Activated CD4-positive, alpha-beta memory T cell treated with anti-CD3 and anti-CD28 coated beads for 36 hours (primary cell): ENCODE measurements at regions of chr13 and their contacts with region 1.

Region 1: DNA sequence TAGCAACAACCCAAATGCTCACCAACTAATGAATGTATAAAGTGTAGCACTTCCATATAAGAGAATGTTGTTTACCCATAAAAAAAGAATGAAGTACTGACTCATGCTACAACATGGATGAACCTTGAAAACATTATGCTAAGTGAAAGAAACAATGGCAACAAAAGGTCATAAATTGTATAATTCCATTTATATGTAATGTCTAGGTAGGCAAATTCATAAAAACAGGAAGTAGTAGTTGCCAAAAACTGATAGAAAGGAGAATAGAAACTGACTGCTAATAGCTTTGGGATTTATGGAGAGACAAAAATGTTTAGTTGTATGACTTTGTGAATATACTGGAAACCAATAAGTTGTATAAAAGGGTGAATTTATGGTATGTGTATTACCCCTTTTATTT is 21.6 kb downstream of the MYCBP2 start:
- DNase-seq: no peak
- H3K4me3 Mint-ChIP-seq: no peak overlapping the region
- H3K27ac Mint-ChIP-seq: no peak overlapping the region
- H3K4me1 Mint-ChIP-seq: peaks cover 74% of the 10 kb centered on the region
- H3K27me3 Mint-ChIP-seq: no peaks in the 10 kb centered on the region

Region 2: DNA sequence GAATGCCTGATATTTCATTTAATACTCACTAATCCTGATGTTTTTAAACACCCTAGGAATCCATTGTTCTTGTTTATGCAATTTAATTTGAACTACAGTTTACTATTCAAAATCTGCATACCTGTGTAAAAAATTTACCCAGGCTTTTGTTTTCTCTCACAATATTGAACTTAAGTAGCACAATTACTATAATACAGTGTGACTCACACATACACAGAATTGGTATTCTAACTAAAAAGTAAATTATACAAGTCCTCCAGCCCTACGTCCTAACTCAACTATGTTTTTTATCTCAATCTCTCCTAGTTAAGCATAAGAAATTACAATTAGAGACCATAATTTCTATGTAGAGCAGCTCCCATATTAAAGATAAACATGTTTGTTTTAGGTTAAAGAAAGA is 20.2 kb before region 1 on chr13:
- CTCF ChIA-PET with region 1: no interaction called
- POLR2A ChIA-PET with region 1: no interaction called
- intact Hi-C with region 1: no loop called
- DNase-seq: no peak
- H3K4me3 Mint-ChIP-seq: no peak overlapping the region
- H3K27ac Mint-ChIP-seq: no peak overlapping the region
- H3K4me1 Mint-ChIP-seq: peaks cover 39% of the 10 kb centered on the region
- H3K27me3 Mint-ChIP-seq: no peaks in the 10 kb centered on the region

Region 3: GRCh38 chr13:77316430-77316829 is 11.2 kb after region 1 on chr13:
- CTCF ChIA-PET with region 1: interaction called, 14 read pairs
- POLR2A ChIA-PET with region 1: no interaction called
- intact Hi-C with region 1: no loop called
- DNase-seq: no peak
- H3K4me3 Mint-ChIP-seq: no peak overlapping the region
- H3K27ac Mint-ChIP-seq: no peak overlapping the region
- H3K4me1 Mint-ChIP-seq: peaks cover 80% of the 10 kb centered on the region
- H3K27me3 Mint-ChIP-seq: no peaks in the 10 kb centered on the region

Region 4: GRCh38 chr13:77323858-77324257 is 18.6 kb after region 1 on chr13:
- CTCF ChIA-PET with region 1: no interaction called
- POLR2A ChIA-PET with region 1: interaction called, 3 read pairs
- intact Hi-C with region 1: loop called (anchors 2 kb)
- DNase-seq: no peak
- H3K4me3 Mint-ChIP-seq: peak overlapping the region; percentile 97
- H3K27ac Mint-ChIP-seq: peak overlapping the region; percentile 11
- H3K4me1 Mint-ChIP-seq: peaks cover 75% of the 10 kb centered on the region
- H3K27me3 Mint-ChIP-seq: no peaks in the 10 kb centered on the region